HCT116 (cell line): ENCODE measurements at regions of chr11 and their contacts with region 1.

Region 1: DNA sequence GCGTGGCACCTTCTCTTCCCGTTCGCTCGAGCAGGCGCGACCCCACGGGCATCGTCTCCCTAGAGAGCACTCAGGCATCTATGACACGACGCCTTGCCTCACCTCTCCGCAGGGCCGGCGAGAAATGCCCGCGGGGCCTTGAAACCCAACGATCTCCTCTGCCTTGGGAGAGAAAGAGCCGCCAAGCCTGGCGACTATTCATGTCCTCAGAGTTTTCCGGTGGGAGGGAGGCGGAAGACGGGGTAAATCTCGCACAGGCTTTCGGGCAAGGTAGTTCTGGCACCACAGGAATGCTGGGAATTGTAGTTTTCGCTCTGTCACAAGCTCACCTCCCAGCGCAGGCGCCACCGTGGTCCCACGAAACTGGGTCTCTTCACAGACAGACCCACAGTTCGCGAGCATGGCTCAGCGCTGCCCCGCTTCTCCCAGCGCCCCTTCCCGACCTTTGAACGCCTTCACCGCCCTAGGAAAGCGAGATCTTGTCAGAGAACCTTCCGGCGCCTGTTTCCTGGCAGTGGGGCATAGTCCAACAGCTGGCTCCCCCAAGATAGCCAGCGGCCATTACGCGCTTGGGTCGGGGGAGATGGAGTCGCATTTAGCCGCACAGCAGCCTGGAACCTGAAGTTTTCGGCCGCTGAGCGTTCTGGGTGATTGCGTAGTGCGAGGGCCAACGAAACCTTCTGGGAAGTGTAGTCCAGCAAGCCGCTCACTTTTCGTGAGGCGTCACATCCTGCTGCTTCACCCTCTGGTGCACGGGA is at the start of gene CCDC90B:
- DNase-seq: peak; percentile 97
- ATAC-seq: peak; percentile 92
- H3K4me3 ChIP-seq: peak within 1 kb of the TSS; percentile 56 to 63
- H3K27ac ChIP-seq: peak within 1 kb of the TSS; percentile 69
- H3K4me1 ChIP-seq: peaks cover 0 to 16% of the 10 kb centered on the region in 2 experiments; a peak in 2 of 4 replicates
- H3K27me3 ChIP-seq: no peaks in the 10 kb centered on the region
- CTCF ChIP-seq: 0 out of 6 replicates have a peak, but pooled peaks of 1 of the 3 experiments have one; percentile 9
- POLR2A ChIP-seq: peak; percentile 91
- RAD21 ChIP-seq: no peak
- total RNA-seq, gene CCDC90B: 30.3 TPM

Region 2: GRCh38 chr11:83193315-83194280 is 92.4 kb before region 1 on chr11 and contains the start of gene ANKRD42:
- CTCF ChIA-PET with region 1: no interaction called
- POLR2A ChIA-PET with region 1: no interaction called
- RAD21 ChIA-PET with region 1: no interaction called
- intact Hi-C with region 1: loop called (anchors 1 kb)
- DNase-seq: peak; percentile 89
- ATAC-seq: peak; percentile 91
- H3K4me3 ChIP-seq: peak within 1 kb of the TSS; percentile 56 to 85
- H3K27ac ChIP-seq: peak within 1 kb of the TSS; percentile 65
- H3K4me1 ChIP-seq: peaks cover 12 to 19% of the 10 kb centered on the region in 2 experiments
- H3K27me3 ChIP-seq: no peaks in the 10 kb centered on the region
- CTCF ChIP-seq: no peak
- POLR2A ChIP-seq: peak; percentile 32
- RAD21 ChIP-seq: no peak
- total RNA-seq, gene ANKRD42: 5.4 TPM